Activated CD8-positive, alpha-beta T cell treated with anti-CD3 and anti-CD28 coated beads for 36 hours (primary cell): ENCODE measurements at regions of chr4 and their contacts with region 1.

Region 1: GRCh38 chr4:121370729-121371325 is 10.0 kb downstream of the QRFPR start:
- DNase-seq: peak; percentile 72
- ATAC-seq: no peak
- H3K4me3 Mint-ChIP-seq: no peak overlapping the region
- H3K27ac Mint-ChIP-seq: no peak overlapping the region
- H3K4me1 Mint-ChIP-seq: no peaks in the 10 kb centered on the region
- H3K27me3 Mint-ChIP-seq: peaks cover 7% of the 10 kb centered on the region
- CTCF ChIP-seq: peak; percentile 61

Region 2: GRCh38 chr4:121358473-121358872 is 12.4 kb before region 1 on chr4:
- CTCF ChIA-PET with region 1: interaction called, 52 read pairs
- POLR2A ChIA-PET with region 1: no interaction called
- intact Hi-C with region 1: no loop called
- DNase-seq: no peak
- ATAC-seq: no peak
- H3K4me3 Mint-ChIP-seq: no peak overlapping the region
- H3K27ac Mint-ChIP-seq: no peak overlapping the region
- H3K4me1 Mint-ChIP-seq: no peaks in the 10 kb centered on the region
- H3K27me3 Mint-ChIP-seq: peaks cover 19% of the 10 kb centered on the region
- CTCF ChIP-seq: no peak

Region 3: DNA sequence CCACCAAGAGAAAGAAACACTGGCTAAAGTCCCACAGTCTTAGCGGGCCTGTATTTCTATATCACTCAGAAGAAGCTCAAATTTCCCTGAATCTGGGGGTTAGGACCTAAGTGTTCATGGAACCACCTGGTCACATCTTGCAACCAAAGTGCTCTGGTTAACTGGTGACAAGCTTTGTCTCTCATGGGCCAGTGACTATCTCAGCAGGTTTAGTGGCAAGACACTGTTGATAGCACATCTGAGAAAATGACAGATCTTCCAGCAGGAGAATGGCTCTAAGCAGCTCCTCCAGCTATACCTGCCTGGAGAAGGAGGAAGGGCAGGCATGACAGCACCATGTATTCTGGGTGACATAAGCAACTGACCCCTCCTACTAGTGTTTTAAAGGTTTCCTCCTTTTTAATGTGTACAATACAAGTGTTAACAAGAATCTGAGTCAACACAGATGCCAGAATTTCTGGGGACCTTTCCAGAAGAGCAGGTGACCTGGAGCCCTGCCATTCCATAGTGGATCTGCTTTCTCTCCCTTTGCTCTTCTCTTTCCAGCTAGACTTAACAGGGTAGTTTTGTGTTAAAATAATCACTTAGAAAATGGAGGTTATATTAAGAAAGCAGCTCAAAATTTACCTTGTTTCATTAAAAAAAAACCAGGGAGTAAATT is 27.2 kb after region 1 on chr4:
- CTCF ChIA-PET with region 1: interaction called, 10 read pairs
- POLR2A ChIA-PET with region 1: no interaction called
- intact Hi-C with region 1: no loop called
- DNase-seq: no peak
- ATAC-seq: no peak
- H3K4me3 Mint-ChIP-seq: no peak overlapping the region
- H3K27ac Mint-ChIP-seq: no peak overlapping the region
- H3K4me1 Mint-ChIP-seq: no peaks in the 10 kb centered on the region
- H3K27me3 Mint-ChIP-seq: no peaks in the 10 kb centered on the region
- CTCF ChIP-seq: no peak

Region 4: GRCh38 chr4:121656269-121656641 is 285.4 kb after region 1 on chr4:
- CTCF ChIA-PET with region 1: interaction called, 7 read pairs
- POLR2A ChIA-PET with region 1: no interaction called
- intact Hi-C with region 1: loop called (anchors 10 kb)
- DNase-seq: peak; percentile 58
- ATAC-seq: peak; percentile 56
- H3K4me3 Mint-ChIP-seq: no peak overlapping the region
- H3K27ac Mint-ChIP-seq: no peak overlapping the region
- H3K4me1 Mint-ChIP-seq: no peaks in the 10 kb centered on the region
- H3K27me3 Mint-ChIP-seq: peaks cover 6% of the 10 kb centered on the region
- CTCF ChIP-seq: no peak

Region 5: DNA sequence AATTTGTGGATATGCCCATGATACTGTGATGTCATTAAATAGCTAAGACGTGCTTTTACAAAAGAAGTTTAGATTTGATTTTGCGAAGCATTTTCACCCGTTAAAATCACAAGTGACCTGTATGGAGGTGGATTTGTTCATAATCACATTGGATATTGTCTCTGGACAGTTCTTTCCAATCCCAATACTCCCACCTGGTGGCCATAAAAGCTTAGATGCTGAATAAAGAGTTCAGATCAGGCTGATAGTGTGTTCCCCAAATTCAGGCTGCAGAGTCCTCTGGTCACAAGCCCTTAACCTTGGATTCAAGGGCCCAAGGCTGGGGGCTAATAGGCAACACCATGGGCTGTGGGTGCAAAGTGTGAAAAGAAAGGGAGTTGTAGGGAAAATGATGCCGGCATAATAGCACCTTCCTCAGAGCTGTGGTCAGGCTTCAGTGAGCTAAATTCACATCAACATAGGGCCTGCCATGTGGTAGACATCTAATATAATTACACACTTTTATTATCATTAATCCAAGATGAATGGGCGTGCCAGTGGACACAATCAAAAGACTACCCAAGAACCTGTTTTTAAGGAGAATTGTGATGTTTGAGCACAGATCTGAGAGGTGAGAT is 366.0 kb after region 1 on chr4:
- CTCF ChIA-PET with region 1: interaction called, 7 read pairs
- POLR2A ChIA-PET with region 1: no interaction called
- intact Hi-C with region 1: loop called (anchors 10 kb)
- DNase-seq: peak; percentile 39
- ATAC-seq: no peak
- H3K4me3 Mint-ChIP-seq: no peak overlapping the region
- H3K27ac Mint-ChIP-seq: no peak overlapping the region
- H3K4me1 Mint-ChIP-seq: no peaks in the 10 kb centered on the region
- H3K27me3 Mint-ChIP-seq: peaks cover 3% of the 10 kb centered on the region
- CTCF ChIP-seq: peak; percentile 51